ENCODE measurements at regions of chr12 and their contacts with region 1.

Region 1: DNA sequence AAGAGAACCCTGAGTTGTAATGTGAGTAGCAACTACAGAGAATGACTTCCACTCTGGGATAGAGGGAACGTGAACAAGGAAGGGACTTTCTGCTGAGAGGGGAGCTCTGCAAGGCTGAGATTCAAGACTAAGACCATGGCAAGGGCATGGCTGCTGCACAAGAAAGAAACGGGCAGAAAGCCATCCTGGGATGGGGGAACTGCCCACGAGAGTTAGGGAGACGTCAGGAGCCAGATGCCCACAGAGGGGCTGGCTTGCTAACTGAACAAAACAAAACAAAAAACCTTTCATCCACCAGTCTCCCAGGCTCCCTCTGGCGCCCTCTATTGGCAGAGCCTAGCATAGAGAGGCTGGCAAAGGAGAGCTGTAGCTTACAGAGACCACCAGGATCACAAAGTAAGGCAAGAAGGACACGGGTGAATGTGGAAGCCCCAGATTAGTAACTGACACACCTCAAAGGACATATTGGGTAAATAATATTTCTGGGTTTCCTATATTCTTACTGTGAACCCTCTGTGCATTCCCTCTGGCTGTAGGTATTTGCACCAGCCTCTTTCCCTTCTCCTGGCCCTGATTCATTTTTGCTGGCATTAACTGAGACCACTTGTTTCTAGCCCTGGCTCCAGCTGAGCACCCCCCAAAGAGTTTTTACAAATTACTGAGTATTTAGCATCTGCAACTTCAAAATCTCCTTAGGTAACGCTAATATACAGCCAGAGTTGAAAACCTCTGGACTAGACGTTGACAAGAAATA is 338.3 kb downstream of the EMP1 start:
- DNase-seq: peak; percentile 64
- ATAC-seq: peak; percentile 57 to 73

Region 2: GRCh38 chr12:13362260-13362841 is 172.5 kb before region 1 on chr12:
- intact Hi-C with region 1: loop called in 1 of 2 experiments (anchors 10 kb)
- DNase-seq: peak; percentile 53
- ATAC-seq: peak in 1 of 2 donors; percentile 75

Region 3: DNA sequence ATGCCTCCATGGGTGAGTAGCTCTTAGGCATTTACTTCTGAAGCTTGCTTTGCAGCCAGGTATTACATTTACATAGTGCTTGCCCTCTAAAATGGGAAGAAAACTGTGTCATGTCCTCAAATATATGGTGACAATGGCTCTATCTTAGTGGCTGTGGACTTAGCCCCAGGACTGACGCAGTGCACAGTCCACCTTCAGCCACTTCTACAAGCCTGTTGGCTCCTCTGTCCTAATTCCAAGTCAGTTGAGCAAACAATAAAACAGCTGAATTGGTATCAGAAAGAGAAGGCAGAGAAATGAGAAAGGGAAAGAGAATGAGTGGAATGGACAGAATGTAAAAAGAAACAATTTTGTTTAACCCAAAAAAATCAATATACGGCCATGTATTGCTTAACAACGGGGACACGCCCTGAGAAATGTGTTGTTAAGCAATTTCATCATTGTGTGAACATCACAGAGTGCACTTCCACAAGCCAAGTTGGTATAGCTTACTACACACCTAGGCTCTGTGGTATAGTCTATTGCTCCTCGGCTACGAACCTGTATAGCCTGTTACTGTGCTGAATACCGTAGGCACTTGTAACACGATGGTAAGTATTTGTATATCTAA is 353.1 kb after region 1 on chr12:
- intact Hi-C with region 1: no loop called
- DNase-seq: no peak
- ATAC-seq: no peak

Measured in left cardiac atrium (tissue), 4 donors.